PC-3 (cell line): ENCODE measurements at regions of chr3 and their contacts with region 1.

Region 1: DNA sequence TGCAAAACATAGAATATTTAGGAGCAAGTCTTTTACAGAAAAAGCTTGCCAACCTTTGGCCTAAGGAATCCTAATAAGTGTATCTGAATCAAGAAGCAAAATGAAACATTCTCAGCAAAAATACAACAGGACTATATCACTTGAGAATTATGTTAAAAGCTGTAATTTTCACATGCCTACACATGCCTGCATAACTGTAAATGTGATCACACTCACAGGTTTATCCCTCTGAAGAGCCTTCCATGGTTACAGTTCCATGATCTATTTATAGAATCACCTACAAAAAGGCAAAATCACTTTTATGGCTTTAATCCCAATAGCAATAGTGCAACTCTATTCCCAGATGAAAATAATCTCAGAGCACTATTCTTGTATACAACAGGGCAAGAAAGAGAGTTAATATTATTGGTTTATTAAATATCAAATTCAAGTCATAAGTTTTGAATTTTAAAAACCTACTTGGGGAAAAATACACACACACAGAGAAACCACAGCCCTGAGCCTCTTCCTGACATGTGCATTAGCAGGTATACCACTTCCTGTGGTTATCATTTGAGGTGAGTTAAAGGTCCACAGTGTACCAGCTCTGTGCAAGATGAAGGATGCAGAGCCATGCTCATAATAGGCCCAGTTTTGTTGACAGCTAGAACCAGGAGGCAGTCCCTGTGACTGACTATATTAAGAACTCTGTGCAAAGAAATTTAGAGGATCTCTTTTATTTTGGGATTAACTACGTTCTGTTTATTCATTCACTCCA is 252.5 kb upstream of the TGFBR2 start:
- DNase-seq: peak; percentile 65
- ATAC-seq: no peak; the same call in 1 of the 2 replicates
- H3K4me3 ChIP-seq: no peak overlapping the region
- H3K27ac ChIP-seq: peak overlapping the region; percentile 69
- H3K4me1 ChIP-seq: peaks cover 90% of the 10 kb centered on the region
- H3K27me3 ChIP-seq: no peaks in the 10 kb centered on the region
- CTCF ChIP-seq: no peak

Region 2: GRCh38 chr3:30112902-30113484 is 240.9 kb before region 1 on chr3:
- CTCF ChIA-PET with region 1: no interaction called
- POLR2A ChIA-PET with region 1: no interaction called
- intact Hi-C with region 1: loop called (anchors 5 kb)
- DNase-seq: peak; percentile 85
- ATAC-seq: peak; percentile 53
- H3K4me3 ChIP-seq: no peak overlapping the region
- H3K27ac ChIP-seq: no peak overlapping the region
- H3K4me1 ChIP-seq: peaks cover 23% of the 10 kb centered on the region
- H3K27me3 ChIP-seq: no peaks in the 10 kb centered on the region
- CTCF ChIP-seq: peak; percentile 88

Region 3: GRCh38 chr3:30324587-30324986 is 29.3 kb before region 1 on chr3:
- CTCF ChIA-PET with region 1: interaction called, 4 read pairs
- POLR2A ChIA-PET with region 1: interaction called, 4 read pairs
- intact Hi-C with region 1: loop called (anchors 1 kb)
- DNase-seq: peak; percentile 90
- ATAC-seq: peak; percentile 98
- H3K4me3 ChIP-seq: 0 out of 2 replicates have a peak overlapping the region, but pooled peaks have one; percentile 5
- H3K27ac ChIP-seq: peak overlapping the region; percentile 91
- H3K4me1 ChIP-seq: peaks cover 17% of the 10 kb centered on the region
- H3K27me3 ChIP-seq: no peaks in the 10 kb centered on the region
- CTCF ChIP-seq: no peak

Region 4: DNA sequence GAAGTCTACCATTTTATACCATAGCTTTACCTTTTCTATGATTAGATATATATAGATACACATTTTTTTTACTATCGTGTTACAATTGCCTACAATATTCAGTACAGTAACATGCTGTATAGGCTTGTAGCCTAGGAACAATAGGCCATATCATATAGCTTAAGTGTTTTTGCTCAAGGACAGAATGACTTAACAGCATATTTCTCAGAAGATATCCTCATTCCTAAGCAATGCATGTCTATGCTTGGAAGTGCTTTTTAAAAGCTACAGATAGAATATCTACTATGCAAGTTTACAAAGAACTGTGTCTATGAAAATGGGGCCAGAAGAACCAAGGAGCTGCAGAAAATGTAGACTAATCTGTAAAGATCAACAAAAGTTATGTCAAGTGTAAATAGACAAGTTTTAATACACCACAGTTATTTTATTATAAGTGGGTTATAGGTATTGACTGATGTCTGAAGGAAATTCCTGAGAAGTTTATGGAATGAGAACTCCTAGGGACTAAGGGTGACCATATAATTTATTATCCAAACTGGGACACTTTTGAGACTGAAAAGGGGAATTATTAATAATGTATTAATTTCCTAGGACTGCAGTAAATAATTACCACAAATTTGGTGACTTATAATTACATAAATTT is 113.8 kb after region 1 on chr3:
- CTCF ChIA-PET with region 1: no interaction called
- POLR2A ChIA-PET with region 1: no interaction called
- intact Hi-C with region 1: loop called (anchors 5 kb)
- DNase-seq: peak; percentile 64
- ATAC-seq: peak; percentile 90
- H3K4me3 ChIP-seq: no peak overlapping the region
- H3K27ac ChIP-seq: peak overlapping the region; percentile 10; the same call in 1 of the 2 replicates
- H3K4me1 ChIP-seq: peaks cover 27% of the 10 kb centered on the region
- H3K27me3 ChIP-seq: no peaks in the 10 kb centered on the region
- CTCF ChIP-seq: no peak

Region 5: DNA sequence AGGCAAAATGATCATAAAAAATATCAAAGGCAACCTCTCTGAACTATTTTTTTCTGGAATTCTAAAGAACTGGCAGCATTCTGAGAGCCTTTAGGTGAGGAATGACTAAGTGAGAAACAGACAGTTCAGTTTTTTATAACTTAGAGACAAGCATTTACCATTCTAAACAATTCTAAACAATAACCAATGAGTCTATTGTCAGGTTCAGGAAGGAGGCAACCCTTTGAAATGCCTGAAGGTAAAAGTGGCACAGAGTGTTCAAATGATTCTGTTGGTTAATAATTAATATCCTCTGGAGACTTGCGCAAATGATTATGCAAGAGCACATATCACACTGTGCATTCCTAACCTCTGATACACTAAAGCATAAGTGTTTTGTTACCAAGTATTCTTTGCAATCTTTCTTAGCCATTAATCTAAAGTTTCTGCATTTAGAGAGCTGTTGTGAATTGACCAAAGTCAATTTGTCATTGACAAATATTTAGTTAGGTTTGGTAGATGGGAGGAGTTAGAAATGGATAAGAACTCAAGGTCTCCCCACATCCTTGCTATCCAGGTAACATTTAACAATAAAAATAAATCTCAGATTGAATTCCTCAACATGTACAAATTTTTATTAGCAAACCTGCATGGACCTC is 243.4 kb after region 1 on chr3:
- CTCF ChIA-PET with region 1: no interaction called
- POLR2A ChIA-PET with region 1: no interaction called
- intact Hi-C with region 1: loop called (anchors 1 kb)
- DNase-seq: peak; percentile 98
- ATAC-seq: peak; percentile 85
- H3K4me3 ChIP-seq: peak overlapping the region; percentile 18; the same call in 1 of the 2 replicates
- H3K27ac ChIP-seq: peak overlapping the region; percentile 88
- H3K4me1 ChIP-seq: peaks cover 35% of the 10 kb centered on the region
- H3K27me3 ChIP-seq: no peaks in the 10 kb centered on the region
- CTCF ChIP-seq: no peak

Region 6: GRCh38 chr3:30751610-30752299 is 397.9 kb after region 1 on chr3:
- CTCF ChIA-PET with region 1: no interaction called
- POLR2A ChIA-PET with region 1: no interaction called
- intact Hi-C with region 1: loop called (anchors 1 kb)
- DNase-seq: peak; percentile 62
- ATAC-seq: peak; percentile 12; the same call in 1 of the 2 replicates
- H3K4me3 ChIP-seq: no peak overlapping the region
- H3K27ac ChIP-seq: no peak overlapping the region
- H3K4me1 ChIP-seq: peaks cover 44% of the 10 kb centered on the region
- H3K27me3 ChIP-seq: no peaks in the 10 kb centered on the region
- CTCF ChIP-seq: peak; percentile 68